ENCODE measurements at regions of chr12 and their contacts with region 1.

Region 1: GRCh38 chr12:10304161-10304574 is 3.5 kb upstream of the KLRD1 start:
- DNase-seq: peak; percentile 64
- ATAC-seq: peak; percentile 86
- H3K4me3 Mint-ChIP-seq: no peak overlapping the region
- H3K27ac Mint-ChIP-seq: peak overlapping the region; percentile 19
- H3K4me1 Mint-ChIP-seq: peaks cover 47% of the 10 kb centered on the region
- H3K27me3 Mint-ChIP-seq: peaks cover 21% of the 10 kb centered on the region

Region 2: DNA sequence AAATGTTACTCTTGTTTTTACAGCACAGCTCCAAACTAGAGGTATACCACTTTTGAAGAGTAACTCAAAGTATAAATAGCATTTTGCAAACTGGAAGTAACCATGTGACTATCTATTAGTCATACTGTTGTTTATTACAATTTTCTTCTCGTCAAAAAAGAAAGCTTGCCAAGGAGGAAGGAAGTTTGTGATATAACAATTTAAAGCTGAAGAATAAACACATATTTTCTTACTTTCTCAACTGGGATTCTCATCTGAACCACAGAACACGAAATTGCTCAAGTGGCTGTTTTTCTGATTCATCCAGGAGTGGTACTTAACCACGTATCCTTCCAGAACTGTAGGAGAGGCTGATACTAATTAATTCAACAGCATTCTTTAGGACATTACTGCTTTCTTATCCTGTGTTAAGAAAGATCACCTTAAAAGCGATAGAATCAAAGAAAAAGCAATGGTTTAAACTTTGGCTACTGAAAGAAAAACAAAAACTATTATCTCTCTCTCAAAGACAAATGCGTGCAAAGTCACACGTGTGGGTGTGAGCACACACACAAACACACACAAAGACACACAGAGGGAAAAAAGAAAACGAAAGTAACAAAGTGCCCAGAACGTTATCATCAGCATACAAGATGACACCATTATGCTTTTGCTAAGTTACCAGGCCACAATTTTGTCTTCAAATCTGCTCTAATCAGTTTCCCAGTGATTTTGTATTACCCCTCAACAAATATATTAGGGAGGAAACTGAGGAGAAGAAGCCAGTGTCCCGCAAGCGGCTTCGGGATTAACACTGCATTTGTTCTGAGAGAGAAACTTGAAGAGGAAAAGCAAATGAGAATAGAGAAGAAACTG is 434.6 kb before region 1 on chr12 and contains the start of gene CLEC2B:
- CTCF ChIA-PET with region 1: no interaction called
- POLR2A ChIA-PET with region 1: no interaction called
- intact Hi-C with region 1: loop called (anchors 2 to 5 kb)
- DNase-seq: peak; percentile 59
- ATAC-seq: peak; percentile 69
- H3K4me3 Mint-ChIP-seq: peak within 1 kb of the TSS; percentile 77
- H3K27ac Mint-ChIP-seq: peak within 1 kb of the TSS; percentile 95
- H3K4me1 Mint-ChIP-seq: peaks cover 23% of the 10 kb centered on the region
- H3K27me3 Mint-ChIP-seq: no peaks in the 10 kb centered on the region
- total RNA-seq, gene CLEC2B: 21.8 to 25.8 TPM

Region 3: GRCh38 chr12:10190558-10191388 is 113.4 kb before region 1 on chr12:
- CTCF ChIA-PET with region 1: no interaction called
- POLR2A ChIA-PET with region 1: no interaction called
- intact Hi-C with region 1: no loop called
- DNase-seq: peak; percentile 68
- ATAC-seq: peak; percentile 100
- H3K4me3 Mint-ChIP-seq: no peak overlapping the region
- H3K27ac Mint-ChIP-seq: no peak overlapping the region
- H3K4me1 Mint-ChIP-seq: no peaks in the 10 kb centered on the region
- H3K27me3 Mint-ChIP-seq: peaks cover 11% of the 10 kb centered on the region

Region 4: DNA sequence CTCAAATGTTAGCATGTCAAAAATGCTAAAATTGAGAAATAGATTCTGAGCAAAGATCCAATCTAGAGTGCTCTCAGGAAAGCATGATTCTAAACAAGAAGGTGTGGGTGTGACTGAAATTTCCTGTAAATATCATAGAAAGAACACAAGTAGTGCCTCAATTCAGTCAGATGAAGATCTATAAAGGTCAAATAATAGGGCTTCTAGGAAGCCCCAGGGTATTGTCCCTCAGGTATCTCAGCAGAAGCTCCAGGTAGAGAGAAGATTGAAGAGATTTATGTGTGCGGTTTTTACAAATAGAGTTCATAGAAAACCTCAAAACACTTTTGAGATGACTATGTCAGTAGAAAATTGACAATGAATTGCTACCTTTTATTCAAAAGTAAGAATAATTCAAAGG is 16.5 kb after region 1 on chr12:
- CTCF ChIA-PET with region 1: interaction called, 8 read pairs
- POLR2A ChIA-PET with region 1: interaction called, 13 read pairs
- intact Hi-C with region 1: loop called (anchors 1 kb)
- DNase-seq: no peak
- ATAC-seq: peak; percentile 91
- H3K4me3 Mint-ChIP-seq: no peak overlapping the region
- H3K27ac Mint-ChIP-seq: peak overlapping the region; percentile 32
- H3K4me1 Mint-ChIP-seq: peaks cover 30% of the 10 kb centered on the region
- H3K27me3 Mint-ChIP-seq: peaks cover 10% of the 10 kb centered on the region

Region 5: DNA sequence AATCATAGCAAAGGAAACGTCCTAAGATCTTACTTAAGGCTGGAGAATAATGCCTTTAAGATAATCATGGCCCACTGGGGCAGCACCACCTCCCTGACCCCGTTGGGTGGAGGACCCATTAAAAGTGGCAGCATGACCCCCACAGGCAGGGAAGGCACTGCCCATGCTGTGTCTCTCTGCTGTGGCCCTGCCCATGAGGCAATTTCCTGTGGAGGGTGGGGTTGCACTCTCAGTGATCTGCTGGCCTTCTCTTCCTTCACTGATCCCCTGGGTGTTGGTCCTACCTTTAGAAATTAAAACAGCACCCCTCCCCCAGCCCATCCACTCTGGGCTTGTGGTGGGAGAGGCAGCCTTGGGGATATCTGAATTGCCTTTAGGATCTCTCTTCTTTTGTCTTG is 68.4 kb after region 1 on chr12:
- CTCF ChIA-PET with region 1: no interaction called
- POLR2A ChIA-PET with region 1: no interaction called
- intact Hi-C with region 1: no loop called
- DNase-seq: no peak
- ATAC-seq: no peak
- H3K4me3 Mint-ChIP-seq: no peak overlapping the region
- H3K27ac Mint-ChIP-seq: no peak overlapping the region
- H3K4me1 Mint-ChIP-seq: peaks cover 10% of the 10 kb centered on the region
- H3K27me3 Mint-ChIP-seq: no peaks in the 10 kb centered on the region

Region 6: GRCh38 chr12:10501031-10501430 is 196.9 kb after region 1 on chr12:
- CTCF ChIA-PET with region 1: no interaction called
- POLR2A ChIA-PET with region 1: no interaction called
- intact Hi-C with region 1: loop called in 1 of 2 experiments (anchors 1 kb)
- DNase-seq: no peak
- ATAC-seq: no peak
- H3K4me3 Mint-ChIP-seq: no peak overlapping the region
- H3K27ac Mint-ChIP-seq: no peak overlapping the region
- H3K4me1 Mint-ChIP-seq: peaks cover 18% of the 10 kb centered on the region
- H3K27me3 Mint-ChIP-seq: peaks cover 27% of the 10 kb centered on the region

Region 7: DNA sequence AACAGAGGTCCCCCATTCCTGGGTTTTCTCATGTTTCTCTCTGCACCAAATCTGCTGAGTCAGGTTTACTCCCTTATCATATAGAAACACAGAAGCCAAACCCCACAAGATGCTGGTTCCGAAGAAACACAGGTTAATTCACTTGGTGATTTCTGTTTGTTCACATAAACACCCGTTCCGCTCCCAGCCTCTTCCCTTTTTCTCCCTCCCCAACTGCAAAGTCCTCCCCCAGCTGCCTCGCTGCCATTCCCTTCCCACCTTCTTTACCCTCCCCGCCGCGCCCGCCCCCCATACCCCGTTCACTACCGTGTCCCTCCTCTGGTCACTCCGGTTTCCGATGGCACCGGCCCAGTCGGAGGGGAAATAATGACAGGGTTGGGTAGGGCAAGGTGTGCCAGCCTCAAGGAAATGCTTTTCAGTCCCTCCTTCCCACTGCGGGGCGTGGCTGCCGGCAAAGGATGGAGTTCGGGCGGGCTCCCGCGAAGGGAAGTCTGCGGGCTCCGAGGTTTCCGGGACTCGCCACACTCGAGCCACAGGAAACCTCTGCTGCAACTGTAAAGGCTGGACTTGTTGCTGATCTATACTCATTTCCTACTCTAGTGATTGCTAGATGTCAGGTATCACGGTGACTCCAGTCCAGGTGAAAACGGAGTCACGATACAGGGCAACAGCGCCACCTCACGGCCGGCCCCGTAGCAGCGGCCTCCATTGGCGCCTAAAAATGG is 369.7 kb after region 1 on chr12 and contains the start of gene STYK1:
- CTCF ChIA-PET with region 1: no interaction called
- POLR2A ChIA-PET with region 1: no interaction called
- intact Hi-C with region 1: loop called in 1 of 2 experiments (anchors 10 kb)
- DNase-seq: peak; percentile 84
- ATAC-seq: peak; percentile 89
- H3K4me3 Mint-ChIP-seq: peak within 1 kb of the TSS; percentile 70
- H3K27ac Mint-ChIP-seq: peak within 1 kb of the TSS; percentile 77
- H3K4me1 Mint-ChIP-seq: peaks cover 28% of the 10 kb centered on the region
- H3K27me3 Mint-ChIP-seq: peaks cover 56% of the 10 kb centered on the region
- total RNA-seq, gene STYK1: not detected

Measured in activated CD4-positive, alpha-beta T cell treated with anti-CD3 and anti-CD28 coated beads for 36 hours (primary cell).